BJ (cell line): ENCODE measurements at regions of chr9 and their contacts with region 1.

Region 1: DNA sequence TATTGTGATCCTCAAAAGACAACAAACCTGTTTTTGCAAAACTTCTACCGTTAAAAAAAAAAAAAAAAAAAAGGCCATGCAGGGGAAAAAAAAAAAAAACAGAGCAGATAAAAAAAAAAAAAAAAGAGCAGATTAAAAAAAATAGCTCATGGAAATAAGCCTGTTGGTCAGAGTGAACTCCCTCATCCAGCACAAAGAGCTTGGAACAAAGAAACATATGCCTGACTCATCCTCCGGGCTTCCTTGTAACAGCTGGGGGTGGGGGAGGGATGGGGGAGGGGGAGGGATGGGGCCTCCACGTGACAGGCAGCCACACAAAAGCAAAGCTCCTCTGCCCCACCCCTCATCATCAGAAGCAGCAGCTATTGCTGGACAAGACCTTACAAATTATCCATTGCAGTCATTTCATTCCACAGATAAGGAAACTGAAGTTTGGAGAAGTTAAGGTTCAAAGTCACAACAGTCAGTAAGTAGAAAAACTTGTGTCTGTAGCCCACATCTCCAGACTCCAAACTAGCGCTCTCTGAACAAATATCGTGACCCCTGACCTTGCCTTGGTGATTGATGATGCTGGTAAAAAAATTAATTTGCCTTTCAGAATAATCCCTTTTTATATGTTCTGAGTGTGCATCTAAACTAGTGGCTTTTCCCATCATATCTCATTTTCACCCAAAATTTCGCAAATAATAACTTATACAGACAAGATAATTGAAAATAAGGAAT is 38.9 kb downstream of the SLC35D2 start:
- DNase-seq: peak; percentile 46
- H3K4me3 ChIP-seq: no peak overlapping the region
- H3K27me3 ChIP-seq: no peaks in the 10 kb centered on the region
- CTCF ChIP-seq: no peak

Region 2: DNA sequence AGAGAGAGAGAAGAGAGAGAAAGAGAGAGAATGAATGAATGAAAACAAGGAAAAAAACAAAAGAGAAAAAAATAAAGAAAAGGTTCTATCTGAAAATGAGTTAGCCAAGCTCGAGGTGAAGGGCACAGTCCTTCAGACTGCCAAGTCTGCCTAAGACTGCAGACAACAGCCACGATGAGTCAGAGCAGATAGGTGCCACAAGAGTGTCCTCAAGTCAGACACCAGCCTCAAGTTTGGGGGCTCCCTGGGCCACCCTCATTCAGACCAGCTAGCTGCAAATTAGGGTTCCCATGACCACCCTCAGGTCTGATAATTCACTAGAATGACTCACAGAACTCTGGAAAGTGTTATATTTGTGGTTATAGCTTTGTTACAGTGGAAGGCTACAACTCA is 91.4 kb after region 1 on chr9:
- CTCF ChIA-PET with region 1: no interaction called
- POLR2A ChIA-PET with region 1: no interaction called
- DNase-seq: no peak
- H3K4me3 ChIP-seq: no peak overlapping the region
- H3K27me3 ChIP-seq: no peaks in the 10 kb centered on the region
- CTCF ChIP-seq: no peak

Region 3: DNA sequence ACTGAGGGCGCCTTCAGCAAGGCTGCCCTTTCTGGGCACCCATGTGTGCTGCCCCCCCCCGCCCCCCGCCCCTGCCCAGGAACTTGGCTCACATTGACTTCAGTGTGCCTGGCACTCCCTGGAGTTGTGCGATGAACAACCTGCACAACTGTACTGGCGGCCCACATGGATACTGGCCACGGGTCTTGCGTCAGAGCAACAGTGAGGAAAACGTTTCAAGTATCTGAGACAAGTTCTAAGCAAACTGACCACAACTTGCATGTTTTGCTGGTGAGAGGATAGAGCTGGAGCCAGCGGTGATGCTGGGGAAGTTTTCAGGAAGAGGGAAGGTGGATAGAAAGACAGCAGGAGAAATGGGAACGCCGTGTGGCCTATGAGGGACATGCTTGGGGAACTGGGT is 150.7 kb after region 1 on chr9:
- CTCF ChIA-PET with region 1: no interaction called
- POLR2A ChIA-PET with region 1: interaction called, 13 read pairs
- DNase-seq: peak; percentile 27
- H3K4me3 ChIP-seq: no peak overlapping the region
- H3K27me3 ChIP-seq: no peaks in the 10 kb centered on the region
- CTCF ChIP-seq: no peak